ENCODE measurements at regions of chr13 and their contacts with region 1.

Region 1: GRCh38 chr13:99269627-99270241 is 11.6 kb upstream of the GPR18 start:
- DNase-seq: peak; percentile 76 to 86 (median 86)
- H3K4me3 ChIP-seq: no peak overlapping the region
- H3K27ac ChIP-seq: peak overlapping the region in 1 of 2 experiments; percentile 3
- H3K4me1 ChIP-seq: peaks cover 3 to 26% (median 11%) of the 10 kb centered on the region in 4 experiments
- H3K27me3 ChIP-seq: no peaks in the 10 kb centered on the region

Region 2: GRCh38 chr13:99200432-99201167 is 69.1 kb before region 1 on chr13 and contains the start of gene UBAC2:
- CTCF ChIA-PET with region 1: interaction called, 181 read pairs
- POLR2A ChIA-PET with region 1: interaction called, 5 read pairs
- DNase-seq: peak; percentile 95 to 97 (median 96)
- H3K4me3 ChIP-seq: peak within 1 kb of the TSS; percentile 71 to 96 (median 89)
- H3K27ac ChIP-seq: peak within 1 kb of the TSS; percentile 90 to 97
- H3K4me1 ChIP-seq: peaks cover 16 to 36% (median 27%) of the 10 kb centered on the region in 4 experiments
- H3K27me3 ChIP-seq: no peaks in the 10 kb centered on the region

Region 3: GRCh38 chr13:99293178-99293577 is 23.4 kb after region 1 on chr13:
- CTCF ChIA-PET with region 1: interaction called, 13 read pairs
- POLR2A ChIA-PET with region 1: no interaction called
- DNase-seq: peak in 2 of 3 donors; percentile 44 to 46
- H3K4me3 ChIP-seq: no peak overlapping the region
- H3K27ac ChIP-seq: peak overlapping the region in 1 of 2 experiments; percentile 27
- H3K4me1 ChIP-seq: peaks cover 3 to 28% (median 13%) of the 10 kb centered on the region in 4 experiments
- H3K27me3 ChIP-seq: no peaks in the 10 kb centered on the region

Region 4: DNA sequence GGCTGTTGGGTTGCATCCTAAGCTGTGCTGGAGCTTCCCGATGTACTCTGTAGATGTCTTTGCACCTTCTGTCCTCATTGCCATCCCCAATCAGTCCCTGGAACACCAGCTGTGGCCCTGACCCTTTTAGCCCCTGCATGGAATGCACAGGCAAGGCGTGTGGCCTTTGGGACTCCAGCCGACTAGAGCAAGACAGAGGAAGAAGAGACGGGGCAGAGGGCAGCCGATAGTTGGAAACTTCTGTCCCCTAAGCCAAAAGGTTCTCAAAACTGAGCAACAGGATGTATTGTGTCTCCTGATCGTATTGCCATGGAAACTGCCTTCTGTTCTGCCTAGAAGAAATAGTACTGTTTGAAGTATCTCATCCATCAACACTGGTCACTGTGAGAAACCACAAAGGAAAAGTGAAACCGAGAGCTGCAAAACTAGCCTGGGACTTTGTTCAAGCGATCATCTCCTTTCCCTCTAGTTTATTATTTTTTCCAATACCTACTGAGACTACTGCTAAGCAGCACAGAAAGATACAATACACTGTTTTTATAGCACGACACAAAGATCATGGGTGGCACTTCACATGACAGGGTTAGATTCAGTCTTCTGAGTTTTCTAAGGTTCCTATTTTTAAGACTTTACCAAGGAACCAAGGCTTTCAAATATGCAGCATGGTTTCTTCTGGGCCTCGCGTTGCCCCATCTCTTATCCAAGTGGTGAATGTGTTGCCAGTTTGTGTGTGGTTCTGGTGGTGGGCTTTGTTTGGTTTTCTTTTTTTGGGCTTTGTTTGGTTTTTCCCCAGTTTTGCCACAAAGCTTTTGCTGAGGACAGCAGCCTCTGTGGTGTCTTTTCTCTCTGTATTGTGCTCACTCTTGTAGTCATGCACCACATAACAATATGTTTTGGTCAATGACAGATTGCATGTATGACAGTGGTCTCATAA is 86.7 kb after region 1 on chr13:
- CTCF ChIA-PET with region 1: interaction called, 16 read pairs
- POLR2A ChIA-PET with region 1: interaction called, 7 read pairs
- DNase-seq: peak; percentile 94 to 99 (median 98)
- H3K4me3 ChIP-seq: peak overlapping the region in 6 of 7 experiments; percentile 3 to 50 (median 30)
- H3K27ac ChIP-seq: peak overlapping the region; percentile 93 to 96
- H3K4me1 ChIP-seq: peaks cover 16 to 56% (median 47%) of the 10 kb centered on the region in 4 experiments
- H3K27me3 ChIP-seq: no peaks in the 10 kb centered on the region

Region 5: DNA sequence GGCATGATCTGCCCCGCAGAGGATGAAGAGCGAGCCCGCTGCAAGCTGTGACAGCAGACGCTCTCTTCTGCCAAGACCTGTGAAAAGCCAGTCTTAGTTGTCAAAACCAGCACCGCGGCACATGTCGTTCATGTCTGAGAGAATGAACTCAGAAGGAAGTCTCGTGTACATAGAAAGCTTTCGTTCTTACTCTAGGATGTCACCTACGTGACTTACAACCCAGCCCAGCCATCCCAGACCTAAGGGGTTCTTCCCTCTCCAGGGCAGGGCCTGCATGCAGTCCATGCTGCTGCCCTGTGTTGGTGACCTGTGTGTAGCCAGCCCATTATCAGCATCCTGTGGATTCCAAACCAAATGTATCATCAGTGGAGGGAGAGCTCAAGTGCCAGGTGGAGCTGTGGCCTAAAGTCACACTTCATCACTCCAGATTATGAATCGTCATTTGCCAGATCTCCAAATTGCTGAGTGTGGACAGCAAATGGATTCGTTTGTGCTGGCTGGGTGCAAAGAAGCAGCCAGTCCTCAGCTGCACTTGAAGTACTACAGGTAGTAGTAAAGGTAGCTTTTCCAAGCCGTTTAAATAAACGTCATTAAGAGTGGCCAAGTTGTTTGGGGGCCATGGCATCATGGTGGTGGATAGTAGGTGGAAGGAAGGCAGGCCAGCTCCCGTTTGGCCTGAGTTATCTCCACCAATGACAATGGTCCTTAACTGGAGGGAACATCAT is 111.3 kb after region 1 on chr13:
- CTCF ChIA-PET with region 1: interaction called, 127 read pairs
- POLR2A ChIA-PET with region 1: no interaction called
- DNase-seq: no peak
- H3K4me3 ChIP-seq: no peak overlapping the region
- H3K27ac ChIP-seq: no peak overlapping the region
- H3K4me1 ChIP-seq: peaks cover 5 to 36% (median 31%) of the 10 kb centered on the region in 4 experiments
- H3K27me3 ChIP-seq: no peaks in the 10 kb centered on the region

Region 6: DNA sequence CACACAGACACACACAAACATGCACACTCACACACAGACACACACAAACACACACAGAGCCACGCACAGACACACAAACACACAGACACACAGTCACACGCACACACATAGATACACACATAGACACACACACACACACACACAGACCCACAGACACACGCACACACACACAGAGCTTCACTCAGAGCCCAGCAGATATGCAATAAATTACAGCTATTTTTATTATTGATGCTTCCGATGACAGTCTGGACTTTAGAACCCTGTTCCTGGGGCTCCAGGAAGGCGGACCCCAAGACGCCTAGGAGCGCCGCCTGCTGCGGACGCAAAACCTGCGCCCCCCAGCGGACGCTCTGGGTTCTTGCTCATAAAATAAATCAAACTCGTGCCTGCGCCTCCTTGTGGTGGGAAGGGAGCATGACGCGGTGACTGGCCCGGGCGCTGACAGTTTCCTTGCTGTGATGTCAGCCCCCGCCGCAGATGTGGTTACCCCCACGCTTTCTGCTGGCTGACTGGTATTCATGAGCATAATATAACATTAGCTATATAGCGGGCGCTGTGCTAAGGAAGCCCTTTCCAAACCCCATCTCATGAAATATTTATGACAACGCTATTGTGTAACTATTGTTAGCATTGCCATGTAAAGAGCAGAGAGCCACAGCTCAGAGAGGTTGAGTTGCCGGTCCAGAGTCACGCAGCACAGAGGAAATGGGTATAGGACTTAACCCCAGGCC is 167.1 kb after region 1 on chr13:
- CTCF ChIA-PET with region 1: interaction called, 196 read pairs
- POLR2A ChIA-PET with region 1: interaction called, 12 read pairs
- DNase-seq: peak; percentile 93 to 97 (median 96)
- H3K4me3 ChIP-seq: peak overlapping the region in 2 of 7 experiments; percentile 23 to 51
- H3K27ac ChIP-seq: no peak overlapping the region
- H3K4me1 ChIP-seq: peaks cover 5 to 26% (median 21%) of the 10 kb centered on the region in 4 experiments
- H3K27me3 ChIP-seq: peaks cover 0 to 3% (median 0%) of the 10 kb centered on the region in 5 experiments

Region 7: GRCh38 chr13:99496184-99497142 is 226.7 kb after region 1 on chr13:
- CTCF ChIA-PET with region 1: no interaction called
- POLR2A ChIA-PET with region 1: no interaction called
- DNase-seq: peak; percentile 85 to 93 (median 91)
- H3K4me3 ChIP-seq: peak overlapping the region in 6 of 7 experiments; percentile 55 to 82 (median 66)
- H3K27ac ChIP-seq: peak overlapping the region in 1 of 2 experiments; percentile 39
- H3K4me1 ChIP-seq: peaks cover 22 to 51% (median 38%) of the 10 kb centered on the region in 4 experiments
- H3K27me3 ChIP-seq: no peaks in the 10 kb centered on the region

Measured in common myeloid progenitor, CD34-positive (primary cell).